ENCODE measurements at regions of chr11 and their contacts with region 1.

Region 1: GRCh38 chr11:66677599-66678375 is at the start of gene RBM4B:
- DNase-seq: peak; percentile 95
- ATAC-seq: peak; percentile 91
- H3K4me3 Mint-ChIP-seq: peak within 1 kb of the TSS; percentile 97
- H3K27ac Mint-ChIP-seq: peak within 1 kb of the TSS; percentile 98
- H3K4me1 Mint-ChIP-seq: peaks cover 38% of the 10 kb centered on the region
- H3K27me3 Mint-ChIP-seq: no peaks in the 10 kb centered on the region
- CTCF ChIP-seq: no peak
- total RNA-seq, gene RBM4B: 30.8 and 34.4 TPM in 2 replicates

Region 2: DNA sequence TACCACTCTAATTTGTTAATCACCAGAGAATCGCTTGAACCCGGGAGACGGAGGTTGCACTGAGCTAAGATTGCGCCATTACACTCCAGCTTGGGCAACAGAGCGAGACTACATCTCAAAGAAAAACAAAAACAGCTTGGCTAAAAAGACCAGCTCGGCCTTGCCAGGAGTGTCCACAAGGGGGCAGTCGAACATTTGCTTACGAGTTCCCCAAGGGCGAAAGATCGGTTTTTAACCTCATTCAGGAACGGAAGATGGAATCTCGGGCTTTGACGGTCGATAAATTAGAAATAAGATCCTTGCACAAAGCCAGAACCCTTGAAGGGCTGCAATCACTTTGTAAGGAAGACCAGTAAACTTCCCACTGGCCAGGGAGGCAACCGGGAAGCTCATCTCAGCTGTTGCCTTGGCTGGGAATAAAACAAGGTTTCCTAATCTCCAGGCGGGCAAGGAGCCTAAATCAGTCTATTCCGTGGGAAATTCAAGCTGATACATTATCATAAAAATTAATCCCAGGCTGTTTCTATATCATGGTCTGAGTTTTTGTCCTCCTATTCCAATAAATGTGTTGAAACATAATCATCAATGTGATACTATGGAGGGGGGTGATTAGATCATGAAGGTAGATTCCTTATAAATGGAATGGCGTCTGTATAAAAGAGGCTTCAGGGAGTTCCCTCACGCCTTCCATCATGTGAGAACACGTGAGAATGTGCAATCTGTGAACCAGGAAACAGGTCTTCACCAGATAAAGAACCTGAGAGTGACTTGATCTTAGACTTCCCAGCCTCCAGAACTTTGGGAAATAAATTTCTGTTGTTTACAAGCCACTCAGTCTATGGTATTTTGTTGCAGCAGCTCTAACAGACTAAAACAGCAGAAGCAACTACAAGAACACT is 291.4 kb before region 1 on chr11:
- CTCF ChIA-PET with region 1: interaction called, 15 read pairs
- POLR2A ChIA-PET with region 1: no interaction called
- intact Hi-C with region 1: loop called (anchors 5 kb)
- DNase-seq: peak; percentile 68
- ATAC-seq: peak; percentile 84
- H3K4me3 Mint-ChIP-seq: peak overlapping the region; percentile 17
- H3K27ac Mint-ChIP-seq: no peak overlapping the region
- H3K4me1 Mint-ChIP-seq: peaks cover 9% of the 10 kb centered on the region
- H3K27me3 Mint-ChIP-seq: no peaks in the 10 kb centered on the region
- CTCF ChIP-seq: no peak

Region 3: GRCh38 chr11:66480117-66480938 is 197.5 kb before region 1 on chr11 and contains the start of gene DPP3:
- CTCF ChIA-PET with region 1: interaction called, 17 read pairs
- POLR2A ChIA-PET with region 1: interaction called, 25 read pairs
- intact Hi-C with region 1: loop called (anchors 1 kb)
- DNase-seq: peak; percentile 91
- ATAC-seq: peak; percentile 98
- H3K4me3 Mint-ChIP-seq: peak within 1 kb of the TSS; percentile 90
- H3K27ac Mint-ChIP-seq: peak within 1 kb of the TSS; percentile 87
- H3K4me1 Mint-ChIP-seq: peaks cover 22% of the 10 kb centered on the region
- H3K27me3 Mint-ChIP-seq: no peaks in the 10 kb centered on the region
- CTCF ChIP-seq: no peak
- total RNA-seq, gene DPP3: 62.2 and 63.3 TPM in 2 replicates

Region 4: DNA sequence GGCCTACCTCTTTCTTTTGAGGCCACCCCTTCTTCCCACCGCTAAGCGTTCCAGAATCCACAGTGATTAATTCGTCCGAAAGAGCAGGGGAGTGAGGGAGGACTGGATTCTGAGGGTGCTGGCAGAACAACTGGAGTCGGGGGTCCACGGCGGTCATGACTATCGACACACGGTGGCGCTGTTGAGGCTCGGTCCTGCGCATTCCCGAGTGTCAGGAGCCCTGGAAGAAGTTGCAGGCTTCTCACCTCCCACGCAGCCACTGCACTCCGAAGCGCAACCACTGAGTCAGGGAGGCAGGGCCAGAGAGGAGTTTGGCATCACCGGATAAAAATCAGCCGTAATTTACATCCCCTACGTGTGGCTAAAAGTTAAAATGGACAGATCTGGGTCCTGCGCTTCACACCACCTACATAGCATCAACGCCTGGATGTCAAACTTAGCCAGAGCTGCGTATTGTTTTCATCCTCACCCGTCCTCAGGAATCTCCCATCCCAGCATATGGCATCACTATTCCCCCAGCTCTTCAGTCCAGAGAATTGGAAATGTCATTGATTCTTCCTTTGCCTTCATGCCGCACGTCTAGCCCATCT is 98.7 kb before region 1 on chr11:
- CTCF ChIA-PET with region 1: interaction called, 186 read pairs
- POLR2A ChIA-PET with region 1: interaction called, 52 read pairs
- intact Hi-C with region 1: loop called (anchors 1 kb)
- DNase-seq: peak; percentile 76
- ATAC-seq: peak; percentile 88
- H3K4me3 Mint-ChIP-seq: no peak overlapping the region
- H3K27ac Mint-ChIP-seq: no peak overlapping the region
- H3K4me1 Mint-ChIP-seq: peaks cover 7% of the 10 kb centered on the region
- H3K27me3 Mint-ChIP-seq: peaks cover 13% of the 10 kb centered on the region
- CTCF ChIP-seq: peak; percentile 42

Region 5: GRCh38 chr11:66616379-66617154 is 61.2 kb before region 1 on chr11 and contains the start of gene RBM14:
- CTCF ChIA-PET with region 1: interaction called, 13 read pairs
- POLR2A ChIA-PET with region 1: interaction called, 100 read pairs
- intact Hi-C with region 1: loop called (anchors 1 kb)
- DNase-seq: peak; percentile 97
- ATAC-seq: peak; percentile 88
- H3K4me3 Mint-ChIP-seq: peak within 1 kb of the TSS; percentile 98
- H3K27ac Mint-ChIP-seq: peak within 1 kb of the TSS; percentile 99
- H3K4me1 Mint-ChIP-seq: peaks cover 63% of the 10 kb centered on the region
- H3K27me3 Mint-ChIP-seq: no peaks in the 10 kb centered on the region
- CTCF ChIP-seq: no peak
- total RNA-seq, gene RBM14: 147 and 160 TPM in 2 replicates

Region 6: DNA sequence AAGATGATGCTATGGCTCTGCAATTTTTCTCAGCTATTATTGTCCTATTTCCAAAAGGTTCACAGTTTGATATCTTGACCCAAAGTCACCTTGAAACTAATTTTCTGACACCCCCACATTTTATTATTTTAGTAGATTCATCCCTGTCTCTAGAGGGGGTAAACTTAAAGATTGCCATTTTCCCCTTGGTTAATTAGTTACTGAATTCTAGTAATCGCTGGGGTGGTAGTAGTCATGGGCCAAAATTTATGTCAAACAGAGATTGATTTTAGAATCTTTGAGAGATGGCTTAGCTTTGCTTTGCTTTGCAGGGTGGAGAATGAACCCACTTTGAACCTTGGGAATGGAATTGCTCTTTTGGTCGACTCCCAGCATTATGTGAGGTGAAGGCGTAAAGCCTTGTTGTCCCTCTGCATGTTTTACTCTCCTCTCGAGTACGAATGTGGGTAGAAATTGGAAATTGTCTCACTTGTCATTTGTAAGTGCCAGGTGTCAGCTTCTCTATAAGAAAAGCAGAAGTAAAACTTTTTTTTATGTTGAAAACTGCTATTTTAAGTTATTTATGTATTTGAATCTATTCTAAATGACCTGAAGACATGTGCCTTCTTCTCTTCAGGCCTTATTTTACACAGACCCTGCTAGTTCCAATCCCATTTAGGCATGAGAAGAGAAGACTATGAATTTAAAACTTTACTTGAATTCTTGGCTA is 123.1 kb after region 1 on chr11:
- CTCF ChIA-PET with region 1: no interaction called
- POLR2A ChIA-PET with region 1: no interaction called
- intact Hi-C with region 1: no loop called
- DNase-seq: no peak
- ATAC-seq: peak; percentile 77
- H3K4me3 Mint-ChIP-seq: peak overlapping the region; percentile 42
- H3K27ac Mint-ChIP-seq: peak overlapping the region; percentile 86
- H3K4me1 Mint-ChIP-seq: peaks cover 68% of the 10 kb centered on the region
- H3K27me3 Mint-ChIP-seq: no peaks in the 10 kb centered on the region
- CTCF ChIP-seq: no peak

Region 7: DNA sequence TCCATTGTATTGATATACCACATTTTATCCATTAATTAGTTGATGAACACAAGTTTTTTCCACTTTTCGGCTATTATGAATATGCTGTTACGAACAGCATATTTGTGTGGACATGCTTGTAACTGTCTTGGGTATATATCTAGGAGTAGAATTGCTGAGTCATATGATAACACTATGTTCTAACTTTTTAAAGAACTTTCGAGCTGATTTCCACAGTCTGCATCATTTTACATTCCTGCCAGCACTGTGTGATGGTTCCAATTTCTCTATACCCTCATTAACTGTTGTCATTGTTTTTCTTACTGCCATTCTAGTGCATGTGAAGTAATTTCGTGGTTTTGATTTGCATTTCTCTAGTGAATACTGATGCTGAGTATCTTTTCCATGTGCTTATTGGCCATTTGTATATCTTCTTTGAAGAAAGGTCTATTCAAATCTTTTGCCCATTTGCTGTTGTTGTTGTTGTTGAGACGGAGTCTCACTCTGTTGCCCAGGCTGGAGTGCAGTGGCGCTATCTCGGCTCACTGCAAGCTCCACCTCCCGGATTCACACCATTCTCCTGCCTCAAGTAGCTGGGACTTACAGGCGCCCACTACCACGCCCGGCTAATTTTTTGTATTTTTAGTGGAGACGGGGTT is 158.1 kb after region 1 on chr11:
- CTCF ChIA-PET with region 1: no interaction called
- POLR2A ChIA-PET with region 1: interaction called, 9 read pairs
- intact Hi-C with region 1: loop called (anchors 1 kb)
- DNase-seq: no peak
- ATAC-seq: no peak
- H3K4me3 Mint-ChIP-seq: no peak overlapping the region
- H3K27ac Mint-ChIP-seq: peak overlapping the region; percentile 5
- H3K4me1 Mint-ChIP-seq: peaks cover 31% of the 10 kb centered on the region
- H3K27me3 Mint-ChIP-seq: no peaks in the 10 kb centered on the region
- CTCF ChIP-seq: no peak

Measured in activated B cell treated with CpG ODN at 0.5 μM for 24 hours (primary cell).